ENCODE measurements at regions of chr21 and their contacts with region 1.

Region 1: GRCh38 chr21:33608559-33608958 is 20.1 kb upstream of the DONSON start:
- DNase-seq: no peak
- H3K4me3 Mint-ChIP-seq: no peak overlapping the region
- H3K27ac Mint-ChIP-seq: no peak overlapping the region
- H3K4me1 Mint-ChIP-seq: no peaks in the 10 kb centered on the region
- H3K27me3 Mint-ChIP-seq: no peaks in the 10 kb centered on the region

Region 2: DNA sequence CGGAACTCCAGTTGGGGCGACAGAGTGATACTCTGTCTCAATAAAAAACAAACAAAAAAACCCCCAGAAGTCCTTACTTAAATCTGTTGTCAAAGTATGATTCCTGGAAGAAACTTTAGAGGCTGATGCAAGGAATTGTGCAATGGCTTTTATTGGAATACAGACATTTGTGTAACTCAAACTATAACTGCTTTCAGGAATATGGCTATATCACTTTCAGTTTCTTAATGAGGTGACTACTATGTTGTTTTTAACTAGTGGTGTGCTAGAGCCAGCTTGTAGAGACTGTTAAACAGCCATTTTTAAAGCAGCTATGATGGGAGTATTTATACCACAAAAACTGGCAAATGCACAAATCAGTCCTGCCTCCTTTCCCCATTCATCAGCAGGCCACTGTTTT is 94.3 kb before region 1 on chr21:
- CTCF ChIA-PET with region 1: interaction called, 12 read pairs
- POLR2A ChIA-PET with region 1: no interaction called
- intact Hi-C with region 1: no loop called
- DNase-seq: no peak
- H3K4me3 Mint-ChIP-seq: no peak overlapping the region
- H3K27ac Mint-ChIP-seq: peak overlapping the region; percentile 30
- H3K4me1 Mint-ChIP-seq: peaks cover 9% of the 10 kb centered on the region
- H3K27me3 Mint-ChIP-seq: no peaks in the 10 kb centered on the region

Region 3: GRCh38 chr21:33566514-33566913 is 42.0 kb before region 1 on chr21:
- CTCF ChIA-PET with region 1: interaction called, 24 read pairs
- POLR2A ChIA-PET with region 1: no interaction called
- intact Hi-C with region 1: no loop called
- DNase-seq: no peak
- H3K4me3 Mint-ChIP-seq: no peak overlapping the region
- H3K27ac Mint-ChIP-seq: peak overlapping the region; percentile 23
- H3K4me1 Mint-ChIP-seq: peaks cover 53% of the 10 kb centered on the region
- H3K27me3 Mint-ChIP-seq: no peaks in the 10 kb centered on the region

Region 4: GRCh38 chr21:33588485-33589335 is 19.8 kb before region 1 on chr21 and contains the start of gene DONSON:
- CTCF ChIA-PET with region 1: interaction called, 51 read pairs
- POLR2A ChIA-PET with region 1: interaction called, 8 read pairs
- intact Hi-C with region 1: no loop called
- DNase-seq: peak; percentile 90
- H3K4me3 Mint-ChIP-seq: peak within 1 kb of the TSS; percentile 92
- H3K27ac Mint-ChIP-seq: peak within 1 kb of the TSS; percentile 72
- H3K4me1 Mint-ChIP-seq: peaks cover 21% of the 10 kb centered on the region
- H3K27me3 Mint-ChIP-seq: no peaks in the 10 kb centered on the region
- total RNA-seq, gene DONSON: 38.2 to 39.0 TPM

Region 5: DNA sequence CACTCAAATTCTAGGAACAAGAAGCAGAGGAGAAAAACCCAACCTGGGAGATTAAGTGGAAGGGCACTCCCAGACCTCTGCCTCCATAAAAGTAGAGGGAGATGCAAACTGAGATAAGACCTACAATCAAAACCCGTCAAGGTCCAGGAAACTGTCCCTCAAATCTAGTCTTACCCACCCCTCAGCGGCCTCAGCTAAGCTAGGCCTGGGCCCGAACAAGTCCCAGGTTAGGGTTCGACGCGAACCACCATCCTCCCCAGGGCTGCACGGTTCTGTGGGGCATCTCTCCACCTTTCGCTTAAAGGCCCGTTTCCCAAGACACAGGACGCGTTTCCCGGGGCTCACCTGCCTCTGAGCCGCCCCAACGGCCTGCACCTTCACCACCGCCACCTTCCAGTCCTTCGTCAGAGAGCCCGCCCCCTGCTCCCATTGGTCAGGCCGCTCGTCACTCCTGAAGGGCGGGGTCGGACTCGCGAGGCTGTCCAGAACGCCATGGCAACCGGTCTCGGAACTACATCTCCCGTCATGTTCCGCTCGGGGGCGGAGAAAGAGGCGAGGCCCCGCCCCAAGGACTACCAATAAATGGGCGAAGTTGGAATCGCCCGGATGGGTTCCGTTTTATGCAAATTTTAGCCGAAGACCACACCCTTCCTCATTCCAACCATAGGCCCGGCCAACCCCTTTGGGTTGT is 32.9 kb after region 1 on chr21 and contains the start of gene CRYZL1:
- CTCF ChIA-PET with region 1: interaction called, 14 read pairs
- POLR2A ChIA-PET with region 1: no interaction called
- intact Hi-C with region 1: no loop called
- DNase-seq: peak; percentile 100
- H3K4me3 Mint-ChIP-seq: peak within 1 kb of the TSS; percentile 86
- H3K27ac Mint-ChIP-seq: peak within 1 kb of the TSS; percentile 93
- H3K4me1 Mint-ChIP-seq: peaks cover 24% of the 10 kb centered on the region
- H3K27me3 Mint-ChIP-seq: peaks cover 16% of the 10 kb centered on the region
- total RNA-seq, gene CRYZL1: 32.8 to 34.9 TPM